Transverse colon (tissue), 4 donors: ENCODE measurements at regions of chr20 and their contacts with region 1.

Region 1: DNA sequence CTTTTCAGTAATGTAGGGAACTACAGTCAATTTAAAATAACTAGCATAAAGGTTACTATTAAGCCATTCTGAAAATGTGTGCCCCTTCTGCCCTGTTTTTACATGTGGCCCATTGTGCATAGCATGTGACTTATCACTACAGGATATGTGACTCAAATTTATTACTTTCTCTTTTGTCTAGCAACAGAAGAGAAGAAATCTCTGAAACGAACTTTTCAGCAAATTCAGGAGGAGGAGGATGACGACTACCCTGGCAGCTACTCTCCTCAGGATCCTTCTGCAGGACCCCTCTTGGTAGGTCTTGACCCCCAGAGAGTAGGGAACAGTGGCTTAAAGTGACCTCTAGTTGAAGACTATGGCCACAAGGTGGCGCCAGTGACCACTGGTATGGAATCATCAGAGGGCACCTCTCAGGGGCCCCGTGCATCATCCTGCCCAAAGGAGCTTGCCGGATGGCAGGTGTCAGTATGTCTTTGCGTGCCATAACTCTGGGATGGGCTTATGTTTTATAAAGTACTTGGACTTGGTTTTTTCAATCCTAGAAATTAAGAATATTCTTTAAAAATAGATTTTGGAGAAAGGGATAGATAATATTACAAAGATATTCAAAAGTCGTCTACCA is 23.9 kb downstream of the RPRD1B start:
- DNase-seq: peak; percentile 85
- H3K4me3 ChIP-seq: no peak overlapping the region
- H3K27ac ChIP-seq: no peak overlapping the region
- H3K4me1 ChIP-seq: peaks cover 0 to 5% (median 0%) of the 10 kb centered on the region in 4 donors
- H3K27me3 ChIP-seq: no peaks in the 10 kb centered on the region
- CTCF ChIP-seq: peak; percentile 85 to 90 (median 88)
- EP300 ChIP-seq: no peak
- POLR2A ChIP-seq: no peak

Region 2: DNA sequence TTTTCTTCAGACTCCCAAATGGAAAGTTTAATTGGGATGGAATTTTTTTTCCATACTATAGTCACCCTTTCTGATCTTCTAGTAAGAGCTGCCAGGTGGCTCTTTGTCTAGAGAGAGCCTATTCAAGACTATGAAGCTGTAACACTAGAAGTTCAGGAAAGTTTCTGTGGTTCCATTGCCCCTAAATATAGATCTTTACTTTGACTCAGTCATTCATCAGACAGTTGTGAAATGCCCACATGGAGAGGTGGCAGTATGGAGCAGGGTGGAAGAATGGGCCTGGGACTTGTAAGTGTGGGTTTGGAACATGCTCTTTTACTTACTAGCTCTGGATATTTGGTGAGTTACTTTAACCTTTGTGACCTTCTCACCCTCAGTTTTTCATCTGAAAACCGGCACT is 275.8 kb before region 1 on chr20:
- in situ Hi-C with region 1: no loop called
- intact Hi-C with region 1: no loop called
- DNase-seq: no peak
- H3K4me3 ChIP-seq: no peak overlapping the region
- H3K27ac ChIP-seq: no peak overlapping the region
- H3K4me1 ChIP-seq: no peaks in the 10 kb centered on the region
- H3K27me3 ChIP-seq: no peaks in the 10 kb centered on the region
- CTCF ChIP-seq: no peak
- EP300 ChIP-seq: no peak
- POLR2A ChIP-seq: no peak

Region 3: DNA sequence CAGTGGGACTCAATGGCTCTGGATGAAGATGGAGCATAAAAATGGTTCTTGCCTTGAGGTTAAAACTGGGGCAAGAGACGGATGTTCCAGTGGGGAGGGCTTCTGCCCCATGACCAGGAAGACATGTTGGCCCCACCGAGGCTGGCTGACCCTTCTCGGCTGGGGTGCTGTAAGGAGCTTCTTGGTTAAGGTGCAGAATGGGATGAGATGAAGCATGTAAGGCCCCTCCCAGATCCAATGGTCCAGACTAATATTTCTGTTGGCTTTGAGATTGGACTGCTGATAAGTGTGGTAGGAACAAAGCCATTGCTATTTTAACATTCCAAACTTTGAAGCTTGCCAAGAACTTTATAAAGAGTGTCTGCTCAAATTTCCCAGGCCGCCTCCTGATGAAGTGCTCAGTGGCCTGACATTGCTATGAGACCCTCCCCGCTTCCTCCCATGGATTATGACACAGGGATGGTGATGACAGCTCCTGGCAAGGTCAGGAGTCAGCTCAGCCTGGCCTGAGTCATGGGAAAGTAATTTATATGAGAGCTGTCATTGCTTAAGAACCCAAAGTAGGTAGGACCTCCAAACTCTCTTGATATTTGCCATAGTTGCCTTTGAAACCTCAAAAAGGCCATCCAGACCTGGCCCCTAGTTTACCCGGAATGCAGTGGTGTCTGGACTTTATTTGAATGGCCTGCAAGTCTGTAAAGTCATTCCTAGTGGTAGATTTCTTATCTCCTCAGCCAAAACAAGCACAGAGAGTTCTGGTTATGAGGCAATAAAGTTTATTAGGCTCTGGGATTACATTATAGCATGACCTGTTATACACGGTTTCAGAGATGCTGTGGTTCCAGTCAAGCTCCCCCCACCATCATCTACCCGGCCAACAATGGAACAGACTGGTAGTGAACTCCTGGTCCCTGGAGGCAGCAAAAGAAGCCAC is 52.4 kb after region 1 on chr20:
- in situ Hi-C with region 1: no loop called
- intact Hi-C with region 1: no loop called
- DNase-seq: peak; percentile 51
- H3K4me3 ChIP-seq: no peak overlapping the region
- H3K27ac ChIP-seq: peak overlapping the region; percentile 67 to 90 (median 72)
- H3K4me1 ChIP-seq: peaks cover 18 to 35% (median 19%) of the 10 kb centered on the region in 4 donors
- H3K27me3 ChIP-seq: no peaks in the 10 kb centered on the region
- CTCF ChIP-seq: no peak
- EP300 ChIP-seq: peak; percentile 78
- POLR2A ChIP-seq: no peak

Region 4: GRCh38 chr20:38165089-38165989 is 107.9 kb after region 1 on chr20 and contains the start of gene TGM2:
- in situ Hi-C with region 1: loop called in 2 of 4 experiments (anchors 10 to 25 kb)
- intact Hi-C with region 1: loop called (anchors 5 kb)
- DNase-seq: peak; percentile 85
- H3K4me3 ChIP-seq: peak within 1 kb of the TSS; percentile 18 to 45 (median 34)
- H3K27ac ChIP-seq: peak within 1 kb of the TSS; percentile 27 to 72 (median 59)
- H3K4me1 ChIP-seq: peaks cover 5 to 29% (median 10%) of the 10 kb centered on the region in 4 donors
- H3K27me3 ChIP-seq: no peaks in the 10 kb centered on the region
- CTCF ChIP-seq: peak; percentile 87 to 95 (median 88)
- EP300 ChIP-seq: no peak
- POLR2A ChIP-seq: no peak
- total RNA-seq, gene TGM2: 14.2 to 52.0 (median 21.7) TPM

Region 5: DNA sequence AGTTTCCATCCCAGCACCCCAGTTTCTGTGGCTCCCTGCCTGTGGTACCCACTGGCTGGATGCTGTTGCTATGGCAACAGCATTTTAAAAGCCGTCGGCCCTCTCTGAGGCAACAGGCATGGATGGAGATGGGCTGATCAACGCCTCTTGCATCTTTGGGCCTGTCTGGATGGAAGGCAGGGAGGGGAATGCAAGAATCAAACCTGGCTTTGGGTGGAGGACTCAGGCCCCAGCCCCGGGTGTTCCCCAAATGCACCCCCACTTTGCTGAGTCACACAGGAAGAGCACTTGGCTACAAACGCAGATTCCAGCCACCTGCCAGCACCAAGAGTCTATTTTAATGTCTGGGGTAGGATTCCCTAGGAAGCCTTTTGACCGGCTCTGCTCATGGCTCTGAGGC is 153.3 kb after region 1 on chr20:
- in situ Hi-C with region 1: loop called in 1 of 4 experiments (anchors 5 kb)
- intact Hi-C with region 1: no loop called
- DNase-seq: no peak
- H3K4me3 ChIP-seq: no peak overlapping the region
- H3K27ac ChIP-seq: no peak overlapping the region
- H3K4me1 ChIP-seq: no peaks in the 10 kb centered on the region
- H3K27me3 ChIP-seq: peaks cover 2% of the 10 kb centered on the region
- CTCF ChIP-seq: no peak
- EP300 ChIP-seq: no peak
- POLR2A ChIP-seq: no peak

Region 6: DNA sequence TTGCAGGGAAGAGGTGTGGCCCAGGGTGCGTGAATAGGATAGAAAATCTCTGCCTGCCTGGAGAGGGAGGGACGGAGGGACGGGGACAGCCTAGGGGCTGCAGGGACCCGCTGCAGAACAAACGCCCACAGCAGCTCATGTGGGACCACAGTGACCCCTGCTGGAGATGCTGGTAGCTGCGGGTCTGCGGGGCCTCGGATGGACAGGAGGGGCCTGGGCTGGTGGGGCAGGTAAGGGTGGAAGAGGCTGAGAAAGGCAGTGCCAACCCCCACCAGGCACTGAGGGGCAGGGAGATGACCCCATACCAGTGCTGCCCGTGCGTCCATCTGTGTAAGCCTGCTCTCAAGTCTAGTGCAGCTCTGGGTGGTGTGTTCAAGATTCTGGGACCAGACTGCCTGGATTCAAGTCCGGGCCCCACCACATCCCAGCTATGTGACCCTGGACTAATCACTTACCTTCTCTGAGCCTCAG is 163.7 kb after region 1 on chr20:
- in situ Hi-C with region 1: loop called in 3 of 4 experiments (anchors 5 to 10 kb)
- intact Hi-C with region 1: loop called (anchors 2 kb)
- DNase-seq: peak; percentile 61
- H3K4me3 ChIP-seq: no peak overlapping the region
- H3K27ac ChIP-seq: no peak overlapping the region
- H3K4me1 ChIP-seq: no peaks in the 10 kb centered on the region
- H3K27me3 ChIP-seq: no peaks in the 10 kb centered on the region
- CTCF ChIP-seq: peak; percentile 79 to 86 (median 85)
- EP300 ChIP-seq: no peak
- POLR2A ChIP-seq: no peak

Region 7: GRCh38 chr20:38229376-38230252 is 172.2 kb after region 1 on chr20:
- in situ Hi-C with region 1: loop called in 3 of 4 experiments (anchors 5 to 10 kb)
- intact Hi-C with region 1: no loop called
- DNase-seq: no peak
- H3K4me3 ChIP-seq: no peak overlapping the region
- H3K27ac ChIP-seq: no peak overlapping the region
- H3K4me1 ChIP-seq: no peaks in the 10 kb centered on the region
- H3K27me3 ChIP-seq: no peaks in the 10 kb centered on the region
- CTCF ChIP-seq: peak in 4 of 5 experiments; percentile 32 to 37 (median 34)
- EP300 ChIP-seq: no peak
- POLR2A ChIP-seq: no peak

Region 8: DNA sequence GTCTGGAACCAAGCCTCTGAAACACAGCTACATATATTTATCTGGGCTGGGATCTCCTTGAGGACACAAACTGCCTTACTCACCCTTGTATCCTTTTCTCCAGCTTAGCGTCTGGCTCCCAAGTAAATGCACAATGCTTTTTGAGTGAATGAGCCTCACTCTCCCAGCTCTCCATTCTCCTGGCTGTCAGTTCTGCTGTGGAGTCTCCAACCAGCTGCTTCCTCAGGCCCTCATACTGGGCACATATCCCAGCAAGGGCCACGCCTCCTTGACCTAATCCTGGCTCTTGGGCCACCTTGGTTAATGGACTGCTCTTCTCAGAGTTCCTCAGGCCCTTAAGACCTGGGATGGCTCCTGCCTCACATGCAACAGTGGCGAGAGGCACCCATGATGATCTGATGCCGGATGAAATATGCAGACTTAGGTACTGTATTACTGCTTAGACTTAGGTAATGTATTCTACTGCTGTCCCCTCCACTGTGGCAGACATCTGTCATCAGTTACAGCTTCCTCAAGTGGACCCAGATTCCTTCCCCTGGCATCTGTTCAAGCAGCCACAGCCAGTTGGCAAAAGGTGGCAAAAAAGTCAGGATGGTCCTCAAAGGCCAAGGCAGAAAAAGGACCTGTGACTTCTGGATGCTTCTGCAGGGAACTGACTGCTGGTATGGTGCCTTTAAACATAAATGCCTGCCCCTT is 361.2 kb after region 1 on chr20:
- in situ Hi-C with region 1: loop called in 2 of 4 experiments (anchors 25 kb)
- intact Hi-C with region 1: no loop called
- DNase-seq: no peak
- H3K4me3 ChIP-seq: no peak overlapping the region
- H3K27ac ChIP-seq: no peak overlapping the region
- H3K4me1 ChIP-seq: no peaks in the 10 kb centered on the region
- H3K27me3 ChIP-seq: no peaks in the 10 kb centered on the region
- CTCF ChIP-seq: no peak
- EP300 ChIP-seq: no peak
- POLR2A ChIP-seq: no peak